Ascending aorta (tissue), 2 donors: ENCODE measurements at regions of chr11 and their contacts with region 1.

Region 1: DNA sequence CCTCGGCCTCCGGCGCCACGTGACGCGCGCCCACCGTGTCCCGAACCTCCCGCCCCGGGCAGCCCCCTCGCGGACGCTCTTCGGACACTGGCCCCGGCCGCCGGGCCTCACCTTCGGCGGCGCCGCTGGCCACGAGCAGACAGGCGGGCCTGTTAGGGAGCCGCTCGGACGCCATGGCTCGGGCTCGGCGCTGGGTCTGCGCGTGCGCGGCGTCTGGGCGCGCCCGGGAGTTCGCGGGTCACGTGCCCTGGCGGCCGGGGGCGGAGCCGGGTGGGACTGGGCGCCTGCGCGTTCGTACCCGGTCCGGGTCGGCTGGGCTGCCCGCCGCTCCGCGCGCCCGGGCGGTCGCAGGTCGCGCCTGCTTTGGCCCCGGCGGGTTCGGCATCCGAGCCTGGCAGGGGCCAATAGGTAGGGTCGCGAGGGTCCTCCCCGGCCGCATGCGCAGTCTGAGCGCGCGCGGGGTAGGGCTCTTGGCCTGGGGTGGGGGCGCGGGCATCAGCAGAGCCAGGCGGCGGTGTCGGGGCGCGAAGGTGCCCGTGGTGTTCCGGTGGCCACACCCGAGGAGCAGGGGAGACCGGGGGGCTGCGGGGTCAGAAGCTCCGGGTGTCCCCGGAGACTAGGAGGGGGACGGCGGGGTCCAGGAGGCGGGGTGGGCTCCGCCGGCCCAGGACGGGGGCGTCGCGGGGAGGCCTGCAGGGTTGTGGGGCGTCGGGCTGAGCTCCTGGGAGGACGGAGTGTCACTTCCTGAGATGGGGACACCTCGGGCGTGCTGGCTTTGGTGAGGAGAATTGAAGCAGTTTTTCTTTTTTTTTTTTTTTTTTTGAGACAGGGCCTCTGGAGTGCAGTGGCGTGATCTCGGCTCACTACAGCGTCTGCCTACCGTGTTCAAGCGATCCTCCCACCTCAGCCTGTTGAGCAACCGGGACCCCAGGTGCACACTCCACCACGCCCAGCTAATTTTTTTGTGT is at the start of gene GATD1:
- DNase-seq: peak; percentile 49 to 94
- H3K4me3 ChIP-seq: peak within 1 kb of the TSS; percentile 65 to 88
- H3K27ac ChIP-seq: peak within 1 kb of the TSS; percentile 56 to 75
- H3K4me1 ChIP-seq: peaks cover 8 to 23% of the 10 kb centered on the region in 2 donors
- H3K27me3 ChIP-seq: no peaks in the 10 kb centered on the region
- CTCF ChIP-seq: no peak
- total RNA-seq, gene GATD1: 12.2 TPM

Region 2: DNA sequence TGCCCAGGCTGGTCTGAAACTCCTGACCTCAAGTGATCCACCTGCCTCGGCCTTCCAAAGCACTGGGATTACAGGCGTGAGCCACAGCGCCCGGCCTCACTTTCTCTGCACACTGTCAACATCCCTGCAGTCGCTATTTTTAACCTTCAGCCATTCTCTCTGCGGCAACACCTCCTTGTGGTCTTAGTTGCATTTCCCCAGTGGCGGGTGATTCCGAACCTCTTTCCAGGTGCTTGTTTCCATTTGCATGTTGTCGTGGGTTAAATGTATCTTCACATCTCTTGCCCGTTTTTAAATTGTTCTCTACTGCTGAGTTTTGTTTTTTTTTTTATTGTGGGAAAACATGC is 148.4 kb before region 1 on chr11:
- intact Hi-C with region 1: no loop called
- DNase-seq: no peak
- H3K4me3 ChIP-seq: peak overlapping the region in 1 of 2 donors; percentile 43
- H3K27ac ChIP-seq: peak overlapping the region; percentile 53 to 75
- H3K4me1 ChIP-seq: peaks cover 0 to 8% of the 10 kb centered on the region in 2 donors
- H3K27me3 ChIP-seq: no peaks in the 10 kb centered on the region
- CTCF ChIP-seq: peak in 2 of 3 experiments; percentile 7 to 42

Region 3: DNA sequence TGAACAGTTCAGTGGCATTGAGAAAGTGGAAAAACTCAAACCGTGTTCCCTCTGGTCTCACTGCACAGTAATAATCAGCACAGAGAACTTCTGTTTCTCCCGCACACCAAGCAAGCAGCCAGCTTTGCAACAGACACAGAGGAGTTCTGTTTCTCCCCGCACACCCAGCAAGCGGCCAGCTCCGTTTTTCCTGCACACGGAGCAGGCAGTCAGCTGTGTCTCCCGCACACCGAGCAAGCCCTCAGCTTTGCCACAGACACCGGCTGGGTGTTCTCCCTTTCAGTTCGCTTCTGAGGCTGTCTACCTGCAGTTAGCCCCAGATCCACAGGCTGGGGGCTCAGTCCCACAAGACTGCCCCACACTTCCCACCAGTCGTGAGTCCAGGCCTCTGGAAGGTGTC is 40.2 kb before region 1 on chr11:
- intact Hi-C with region 1: no loop called
- DNase-seq: no peak
- H3K4me3 ChIP-seq: no peak overlapping the region
- H3K27ac ChIP-seq: no peak overlapping the region
- H3K4me1 ChIP-seq: no peaks in the 10 kb centered on the region
- H3K27me3 ChIP-seq: no peaks in the 10 kb centered on the region
- CTCF ChIP-seq: no peak

Region 4: DNA sequence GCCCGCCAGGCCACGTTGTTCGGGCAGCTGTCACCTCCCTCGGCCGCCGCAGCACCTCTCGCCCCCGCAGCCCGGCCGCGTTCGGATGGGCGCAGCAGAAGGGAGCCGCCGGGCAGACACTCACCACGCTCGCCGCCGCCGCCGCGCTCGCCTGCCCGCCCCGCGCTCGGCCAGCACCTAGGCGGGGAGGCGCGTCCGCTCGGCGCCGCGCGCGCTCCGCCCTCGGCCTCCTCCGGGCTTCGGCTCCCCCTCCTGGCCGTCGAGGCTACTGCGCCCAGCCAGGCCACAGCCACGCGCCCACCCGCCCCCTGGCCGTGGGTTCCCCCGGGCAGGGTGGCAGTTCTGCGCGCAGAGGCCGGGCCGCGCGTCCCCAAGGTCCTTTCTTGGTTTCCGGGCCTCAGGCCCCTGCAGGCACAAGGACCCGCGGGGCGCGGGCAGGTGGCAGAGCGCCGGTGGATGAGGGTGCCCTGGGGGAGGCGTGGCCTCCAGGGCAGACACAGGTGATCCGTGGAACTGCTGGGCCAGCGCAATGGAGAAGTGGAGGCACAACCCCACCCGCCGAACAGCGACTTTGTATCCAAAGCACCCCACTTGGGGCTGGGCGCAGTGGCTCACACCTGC is 20.6 kb after region 1 on chr11 and contains the start of gene SLC25A22:
- intact Hi-C with region 1: loop called (anchors 2 kb)
- DNase-seq: peak in 1 of 2 donors; percentile 83
- H3K4me3 ChIP-seq: peak within 1 kb of the TSS; percentile 78 to 85
- H3K27ac ChIP-seq: peak within 1 kb of the TSS; percentile 78 to 79
- H3K4me1 ChIP-seq: peaks cover 12 to 20% of the 10 kb centered on the region in 2 donors
- H3K27me3 ChIP-seq: no peaks in the 10 kb centered on the region
- CTCF ChIP-seq: peak; percentile 78 to 93 (median 86)
- total RNA-seq, gene SLC25A22: 5.6 TPM

Region 5: GRCh38 chr11:809287-810039 is 31.9 kb after region 1 on chr11 and contains the start of gene RPLP2:
- intact Hi-C with region 1: loop called (anchors 1 kb)
- DNase-seq: peak; percentile 88 to 99
- H3K4me3 ChIP-seq: peak within 1 kb of the TSS; percentile 73 to 97
- H3K27ac ChIP-seq: peak within 1 kb of the TSS; percentile 93 to 98
- H3K4me1 ChIP-seq: peaks cover 9 to 34% of the 10 kb centered on the region in 2 donors
- H3K27me3 ChIP-seq: no peaks in the 10 kb centered on the region
- CTCF ChIP-seq: no peak
- total RNA-seq, gene RPLP2: 897 TPM